ENCODE measurements at regions of chr1 and their contacts with region 1.

Region 1: GRCh38 chr1:23019094-23019862 is at the start of gene KDM1A:
- DNase-seq: peak; percentile 98
- H3K4me3 Mint-ChIP-seq: peak within 1 kb of the TSS; percentile 74
- H3K27ac Mint-ChIP-seq: peak within 1 kb of the TSS; percentile 47
- H3K4me1 Mint-ChIP-seq: peaks cover 15% of the 10 kb centered on the region
- H3K27me3 Mint-ChIP-seq: no peaks in the 10 kb centered on the region
- CTCF ChIP-seq: no peak
- total RNA-seq, gene KDM1A: 64.2 and 72.3 TPM in 2 replicates

Region 2: DNA sequence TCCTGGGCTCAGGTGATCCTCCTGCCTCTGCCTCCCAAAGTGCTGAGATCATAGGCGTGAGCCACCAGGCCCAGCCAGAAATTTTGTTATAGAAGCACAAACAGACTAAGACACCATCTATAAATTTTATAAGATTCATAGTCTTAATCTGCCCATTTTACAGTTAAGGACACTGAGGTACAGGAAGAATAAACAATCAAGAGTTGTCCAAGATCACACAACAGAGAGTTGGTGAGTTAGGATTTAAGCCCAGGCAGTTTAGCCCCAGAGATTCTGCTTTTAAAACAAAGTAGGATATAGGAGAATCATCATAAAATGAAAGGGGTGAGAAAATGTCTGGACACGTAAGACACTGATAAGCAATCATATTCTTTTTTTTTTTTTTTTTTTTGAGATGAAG is 10.4 kb before region 1 on chr1:
- CTCF ChIA-PET with region 1: no interaction called
- POLR2A ChIA-PET with region 1: interaction called, 48 read pairs
- intact Hi-C with region 1: no loop called
- DNase-seq: no peak
- H3K4me3 Mint-ChIP-seq: no peak overlapping the region
- H3K27ac Mint-ChIP-seq: no peak overlapping the region
- H3K4me1 Mint-ChIP-seq: peaks cover 18% of the 10 kb centered on the region
- H3K27me3 Mint-ChIP-seq: no peaks in the 10 kb centered on the region
- CTCF ChIP-seq: no peak

Region 3: DNA sequence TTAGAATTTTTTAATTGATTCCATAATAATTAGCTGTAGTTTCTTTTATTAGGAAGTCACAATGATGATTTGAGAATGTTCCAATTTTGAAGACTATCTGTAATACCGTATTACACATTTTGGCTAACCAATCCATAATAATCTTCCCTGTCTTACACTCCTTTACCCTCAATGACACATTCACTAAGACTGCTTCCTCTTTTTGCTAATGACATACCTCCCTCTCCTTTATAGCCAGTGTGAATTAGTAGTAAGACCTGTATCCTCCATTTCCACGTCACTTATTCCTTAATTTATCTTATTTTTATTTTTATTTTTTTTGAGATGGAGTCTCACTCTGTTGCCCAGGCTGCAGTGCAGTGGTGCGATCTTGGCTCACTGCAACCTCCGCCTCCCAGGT is 10.1 kb after region 1 on chr1:
- CTCF ChIA-PET with region 1: no interaction called
- POLR2A ChIA-PET with region 1: interaction called, 38 read pairs
- intact Hi-C with region 1: no loop called
- DNase-seq: no peak
- H3K4me3 Mint-ChIP-seq: no peak overlapping the region
- H3K27ac Mint-ChIP-seq: no peak overlapping the region
- H3K4me1 Mint-ChIP-seq: peaks cover 27% of the 10 kb centered on the region
- H3K27me3 Mint-ChIP-seq: no peaks in the 10 kb centered on the region
- CTCF ChIP-seq: no peak

Region 4: GRCh38 chr1:23044035-23044434 is 24.8 kb after region 1 on chr1:
- CTCF ChIA-PET with region 1: no interaction called
- POLR2A ChIA-PET with region 1: interaction called, 18 read pairs
- intact Hi-C with region 1: no loop called
- DNase-seq: peak; percentile 18
- H3K4me3 Mint-ChIP-seq: no peak overlapping the region
- H3K27ac Mint-ChIP-seq: no peak overlapping the region
- H3K4me1 Mint-ChIP-seq: peaks cover 19% of the 10 kb centered on the region
- H3K27me3 Mint-ChIP-seq: no peaks in the 10 kb centered on the region
- CTCF ChIP-seq: no peak

Measured in MCF 10A (cell line).